Calu3 (cell line): ENCODE measurements at regions of chr1 and their contacts with region 1.

Region 1: GRCh38 chr1:155978325-155978972 is at the start of gene ARHGEF2:
- DNase-seq: peak; percentile 78
- H3K4me3 Mint-ChIP-seq: peak within 1 kb of the TSS; percentile 78
- H3K27ac Mint-ChIP-seq: peak within 1 kb of the TSS; percentile 73
- H3K4me1 Mint-ChIP-seq: peaks cover 81% of the 10 kb centered on the region
- H3K27me3 Mint-ChIP-seq: no peaks in the 10 kb centered on the region
- CTCF ChIP-seq: no peak
- total RNA-seq, gene ARHGEF2: 69.2 and 97.6 TPM in 2 replicates

Region 2: DNA sequence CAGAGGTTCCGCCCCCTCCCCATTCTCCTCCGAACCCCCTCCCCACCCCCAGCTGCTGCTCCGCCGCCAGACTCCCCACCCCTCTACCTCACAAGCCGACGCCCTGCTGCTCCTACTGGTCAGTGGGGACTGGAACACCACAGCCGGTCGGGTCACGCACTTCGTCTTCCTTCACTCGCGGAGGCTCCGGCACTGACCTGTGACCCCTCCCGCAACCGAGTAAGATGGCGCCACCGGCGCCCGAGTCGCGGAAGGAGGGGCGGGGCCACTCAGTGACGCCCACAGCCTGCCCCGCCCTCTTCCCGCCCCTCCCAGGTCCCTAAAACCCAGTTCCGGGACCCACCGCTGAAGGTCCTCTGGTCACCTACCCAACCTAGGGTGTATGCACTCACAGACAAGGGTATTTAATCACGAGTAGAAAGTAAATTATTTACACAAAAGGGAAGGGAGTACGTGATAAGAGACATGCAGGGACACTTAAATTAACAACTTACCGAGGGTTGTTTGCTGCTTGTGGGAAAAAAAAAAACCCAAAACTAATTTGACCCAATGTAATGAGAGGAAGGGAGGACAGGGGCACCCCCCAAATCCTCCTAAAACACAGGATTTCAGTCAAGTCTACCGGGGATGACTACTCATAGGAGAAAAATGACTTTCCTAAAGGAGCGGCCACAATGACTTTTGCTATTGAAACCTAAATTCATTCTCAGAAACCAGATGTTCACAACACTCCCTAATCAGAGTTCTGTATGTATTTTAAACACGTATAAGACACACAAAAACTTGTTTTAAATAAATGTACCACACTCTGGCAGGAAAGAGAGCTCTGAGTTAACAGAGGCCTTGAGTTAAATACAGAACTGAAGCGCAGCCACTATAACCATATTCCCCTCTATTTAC is 67.0 kb before region 1 on chr1 and contains the start of gene RIT1:
- CTCF ChIA-PET with region 1: interaction called, 10 read pairs
- intact Hi-C with region 1: no loop called
- DNase-seq: peak; percentile 92
- H3K4me3 Mint-ChIP-seq: peak within 1 kb of the TSS; percentile 97
- H3K27ac Mint-ChIP-seq: peak within 1 kb of the TSS; percentile 99
- H3K4me1 Mint-ChIP-seq: peaks cover 20% of the 10 kb centered on the region
- H3K27me3 Mint-ChIP-seq: no peaks in the 10 kb centered on the region
- CTCF ChIP-seq: no peak
- total RNA-seq, gene RIT1: 34.4 and 34.7 TPM in 2 replicates

Region 3: GRCh38 chr1:155938220-155938627 is 40.2 kb before region 1 on chr1:
- CTCF ChIA-PET with region 1: interaction called, 11 read pairs
- intact Hi-C with region 1: no loop called
- DNase-seq: peak; percentile 58
- H3K4me3 Mint-ChIP-seq: no peak overlapping the region
- H3K27ac Mint-ChIP-seq: peak overlapping the region; percentile 69
- H3K4me1 Mint-ChIP-seq: peaks cover 35% of the 10 kb centered on the region
- H3K27me3 Mint-ChIP-seq: no peaks in the 10 kb centered on the region
- CTCF ChIP-seq: peak; percentile 24

Region 4: DNA sequence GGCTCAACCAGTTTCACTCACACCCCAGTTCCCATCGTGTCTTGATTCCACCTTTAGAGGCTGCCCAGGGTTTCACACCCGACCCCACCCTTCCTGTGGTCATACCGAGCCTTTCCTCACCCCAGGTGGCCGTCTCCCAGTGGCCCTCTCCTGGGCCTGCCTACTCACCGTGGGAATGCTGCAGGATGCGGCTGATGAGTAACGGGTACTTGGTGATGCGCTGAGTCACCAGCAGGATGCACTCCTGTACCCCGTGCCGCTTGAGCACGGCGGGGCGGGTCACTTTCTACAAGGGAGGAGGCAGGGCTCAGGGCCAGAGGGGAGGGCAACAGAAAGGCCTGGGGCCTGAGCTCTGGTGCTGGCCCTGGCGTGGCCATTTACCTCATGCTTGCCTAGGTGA is 16.5 kb before region 1 on chr1:
- CTCF ChIA-PET with region 1: interaction called, 10 read pairs
- intact Hi-C with region 1: no loop called
- DNase-seq: peak; percentile 86
- H3K4me3 Mint-ChIP-seq: peak overlapping the region; percentile 66
- H3K27ac Mint-ChIP-seq: peak overlapping the region; percentile 98
- H3K4me1 Mint-ChIP-seq: peaks cover 34% of the 10 kb centered on the region
- H3K27me3 Mint-ChIP-seq: no peaks in the 10 kb centered on the region
- CTCF ChIP-seq: peak; percentile 59

Region 5: DNA sequence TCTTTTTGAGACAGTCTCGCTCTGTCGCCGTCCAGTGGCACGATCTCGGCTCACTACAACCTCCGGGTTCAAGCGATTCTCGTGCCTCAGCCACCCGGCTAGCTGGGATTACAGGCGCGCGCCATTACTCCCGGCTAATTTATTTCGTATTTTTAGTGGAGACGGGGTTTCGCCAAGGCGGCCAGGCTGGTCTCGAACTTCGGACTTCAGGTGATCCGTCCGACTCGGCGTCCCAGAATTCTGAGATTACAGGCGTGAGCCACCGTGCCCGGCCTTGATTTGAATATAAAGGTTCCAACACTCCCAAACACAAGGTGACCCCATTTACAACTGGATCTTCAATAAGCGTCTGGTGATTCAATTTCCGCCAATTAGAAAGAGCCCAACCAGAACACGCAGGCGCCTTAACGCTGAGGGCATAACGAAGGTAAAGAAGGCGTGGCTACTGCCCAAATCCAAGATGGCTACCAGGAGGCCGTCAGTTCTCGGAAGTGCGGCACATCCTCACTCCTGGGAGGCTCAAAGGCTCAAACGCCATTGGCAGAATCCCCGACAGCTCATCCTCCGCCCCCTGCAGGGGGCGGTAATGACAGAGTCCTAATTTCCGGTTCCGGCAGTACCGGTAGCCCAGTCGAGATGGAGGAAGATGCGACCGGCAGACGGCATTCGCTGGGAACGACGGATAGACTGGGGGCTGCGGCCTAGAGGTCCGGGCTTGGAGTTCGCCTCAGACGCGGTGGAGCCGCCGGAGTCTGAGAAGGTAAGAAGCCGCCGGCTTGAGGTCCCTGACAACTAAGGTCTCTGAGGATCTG is 215.2 kb after region 1 on chr1 and contains the start of gene SLC25A44:
- CTCF ChIA-PET with region 1: no interaction called
- intact Hi-C with region 1: no loop called
- DNase-seq: peak; percentile 98
- H3K4me3 Mint-ChIP-seq: peak within 1 kb of the TSS; percentile 95
- H3K27ac Mint-ChIP-seq: peak within 1 kb of the TSS; percentile 85
- H3K4me1 Mint-ChIP-seq: peaks cover 30% of the 10 kb centered on the region
- H3K27me3 Mint-ChIP-seq: peaks cover 7% of the 10 kb centered on the region
- CTCF ChIP-seq: peak; percentile 52
- total RNA-seq, gene SLC25A44: 28.2 and 32.5 TPM in 2 replicates

Region 6: GRCh38 chr1:156359973-156360372 is 381.5 kb after region 1 on chr1:
- CTCF ChIA-PET with region 1: no interaction called
- intact Hi-C with region 1: no loop called
- DNase-seq: peak; percentile 24
- H3K4me3 Mint-ChIP-seq: no peak overlapping the region
- H3K27ac Mint-ChIP-seq: no peak overlapping the region
- H3K4me1 Mint-ChIP-seq: no peaks in the 10 kb centered on the region
- H3K27me3 Mint-ChIP-seq: peaks cover 74% of the 10 kb centered on the region
- CTCF ChIP-seq: peak; percentile 16